Activated T-helper 1 cell treated with anti-CD3 and anti-CD28 coated beads, Interleukin-12 subunit alpha, Interleukin-12 subunit beta, Interleukin-2, Interleukin-4 antibody, amounts not matched to agents 30 ng/mL and 10 ng/mL and 1 ng/mL, durations not matched to agents 14 hours and 24 hours and 36 hours (primary cell): ENCODE measurements at regions of chr13 and their contacts with region 1.

Region 1: DNA sequence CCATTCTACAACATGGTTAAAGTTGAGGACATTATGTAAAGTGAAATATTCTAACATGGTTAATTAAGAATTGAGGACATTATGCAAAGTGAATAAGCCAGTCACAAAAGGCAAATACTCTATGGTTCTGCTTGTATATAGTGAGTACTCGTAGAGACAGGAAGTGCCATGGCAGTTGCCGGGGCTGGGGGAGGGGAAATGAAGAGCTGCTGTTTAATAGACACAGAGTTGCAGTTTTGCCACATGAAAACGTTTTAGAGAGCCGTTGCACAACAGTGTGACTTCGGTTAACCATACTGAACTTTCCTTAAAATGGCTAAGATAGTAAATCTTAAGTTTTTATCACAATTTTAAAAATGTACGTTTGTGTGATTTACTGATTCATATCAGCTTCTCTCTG is 176.9 kb downstream of the SHISA2 start:
- DNase-seq: peak; percentile 44
- H3K4me3 Mint-ChIP-seq: peak overlapping the region; percentile 62
- H3K27ac Mint-ChIP-seq: peak overlapping the region; percentile 87
- H3K4me1 Mint-ChIP-seq: peaks cover 67% of the 10 kb centered on the region
- H3K27me3 Mint-ChIP-seq: peaks cover 2% of the 10 kb centered on the region

Region 2: DNA sequence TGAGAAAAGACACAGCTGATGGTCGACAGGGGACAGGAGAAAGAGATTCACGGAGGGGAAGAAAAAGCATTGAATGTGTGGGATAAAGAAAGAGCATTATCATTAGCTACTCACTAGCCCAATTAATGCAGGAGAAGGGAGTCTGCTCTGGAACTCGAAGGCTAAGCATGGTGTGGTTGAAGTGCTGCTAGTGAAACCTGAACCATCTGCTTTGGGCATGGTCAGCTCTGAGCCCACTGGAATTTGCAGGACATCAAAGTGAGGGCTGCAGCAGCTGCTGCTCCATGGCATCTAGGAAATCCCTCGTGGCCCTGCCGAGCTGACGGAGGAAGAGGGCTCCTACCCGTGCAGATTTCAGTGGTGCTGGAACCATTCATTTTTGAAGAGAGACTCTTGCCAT is 182.8 kb before region 1 on chr13:
- intact Hi-C with region 1: no loop called
- DNase-seq: no peak
- H3K4me3 Mint-ChIP-seq: no peak overlapping the region
- H3K27ac Mint-ChIP-seq: no peak overlapping the region
- H3K4me1 Mint-ChIP-seq: peaks cover 7% of the 10 kb centered on the region
- H3K27me3 Mint-ChIP-seq: peaks cover 3% of the 10 kb centered on the region

Region 3: DNA sequence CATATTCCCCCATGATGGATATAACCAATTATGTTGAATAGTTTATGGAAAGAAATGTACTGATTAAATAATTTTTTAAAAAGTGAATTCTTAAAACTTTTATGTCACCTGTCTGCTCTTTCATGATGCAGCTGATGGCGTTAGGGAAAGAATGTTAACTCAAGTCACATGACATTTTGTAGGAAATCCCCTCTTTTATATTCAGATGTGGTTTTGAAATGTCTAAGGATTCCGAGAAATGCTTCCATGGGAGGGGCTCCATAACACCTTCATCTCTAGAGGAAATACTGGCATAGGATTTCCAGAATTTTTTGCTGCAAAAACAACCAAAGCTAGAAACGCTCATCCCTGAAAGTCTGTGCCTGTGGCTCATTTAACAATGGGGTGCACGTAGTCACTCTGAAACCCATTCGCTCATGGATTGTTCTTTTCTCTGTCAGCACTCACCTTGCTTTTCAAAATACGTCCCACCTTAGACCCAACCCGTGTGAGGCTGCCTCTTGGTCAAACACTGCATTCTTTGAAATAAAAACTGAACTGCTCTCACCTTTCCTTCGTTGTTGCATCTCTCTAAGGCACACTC is 112.0 kb before region 1 on chr13:
- intact Hi-C with region 1: loop called (anchors 5 kb)
- DNase-seq: peak; percentile 19
- H3K4me3 Mint-ChIP-seq: peak overlapping the region; percentile 55
- H3K27ac Mint-ChIP-seq: peak overlapping the region; percentile 93
- H3K4me1 Mint-ChIP-seq: peaks cover 51% of the 10 kb centered on the region
- H3K27me3 Mint-ChIP-seq: no peaks in the 10 kb centered on the region

Region 4: GRCh38 chr13:25847145-25847544 is 27.8 kb before region 1 on chr13:
- intact Hi-C with region 1: loop called (anchors 1 kb)
- DNase-seq: peak; percentile 12
- H3K4me3 Mint-ChIP-seq: peak overlapping the region; percentile 54
- H3K27ac Mint-ChIP-seq: peak overlapping the region; percentile 79
- H3K4me1 Mint-ChIP-seq: peaks cover 62% of the 10 kb centered on the region
- H3K27me3 Mint-ChIP-seq: peaks cover 5% of the 10 kb centered on the region